Activated CD4-positive, alpha-beta T cell treated with anti-CD3 and anti-CD28 coated beads for 36 hours (primary cell): ENCODE measurements at regions of chr2 and their contacts with region 1.

Region 1: GRCh38 chr2:241129086-241129871 is 20.0 kb downstream of the PASK start:
- DNase-seq: no peak
- ATAC-seq: no peak
- H3K4me3 Mint-ChIP-seq: no peak overlapping the region
- H3K27ac Mint-ChIP-seq: peak overlapping the region; percentile 95
- H3K4me1 Mint-ChIP-seq: peaks cover 22% of the 10 kb centered on the region
- H3K27me3 Mint-ChIP-seq: no peaks in the 10 kb centered on the region

Region 2: GRCh38 chr2:241432824-241433448 is 303.7 kb after region 1 on chr2:
- CTCF ChIA-PET with region 1: no interaction called
- POLR2A ChIA-PET with region 1: interaction called, 10 read pairs
- intact Hi-C with region 1: no loop called
- DNase-seq: no peak
- ATAC-seq: no peak
- H3K4me3 Mint-ChIP-seq: no peak overlapping the region
- H3K27ac Mint-ChIP-seq: no peak overlapping the region
- H3K4me1 Mint-ChIP-seq: no peaks in the 10 kb centered on the region
- H3K27me3 Mint-ChIP-seq: no peaks in the 10 kb centered on the region